ENCODE measurements at regions of chr1 and their contacts with region 1.

Region 1: DNA sequence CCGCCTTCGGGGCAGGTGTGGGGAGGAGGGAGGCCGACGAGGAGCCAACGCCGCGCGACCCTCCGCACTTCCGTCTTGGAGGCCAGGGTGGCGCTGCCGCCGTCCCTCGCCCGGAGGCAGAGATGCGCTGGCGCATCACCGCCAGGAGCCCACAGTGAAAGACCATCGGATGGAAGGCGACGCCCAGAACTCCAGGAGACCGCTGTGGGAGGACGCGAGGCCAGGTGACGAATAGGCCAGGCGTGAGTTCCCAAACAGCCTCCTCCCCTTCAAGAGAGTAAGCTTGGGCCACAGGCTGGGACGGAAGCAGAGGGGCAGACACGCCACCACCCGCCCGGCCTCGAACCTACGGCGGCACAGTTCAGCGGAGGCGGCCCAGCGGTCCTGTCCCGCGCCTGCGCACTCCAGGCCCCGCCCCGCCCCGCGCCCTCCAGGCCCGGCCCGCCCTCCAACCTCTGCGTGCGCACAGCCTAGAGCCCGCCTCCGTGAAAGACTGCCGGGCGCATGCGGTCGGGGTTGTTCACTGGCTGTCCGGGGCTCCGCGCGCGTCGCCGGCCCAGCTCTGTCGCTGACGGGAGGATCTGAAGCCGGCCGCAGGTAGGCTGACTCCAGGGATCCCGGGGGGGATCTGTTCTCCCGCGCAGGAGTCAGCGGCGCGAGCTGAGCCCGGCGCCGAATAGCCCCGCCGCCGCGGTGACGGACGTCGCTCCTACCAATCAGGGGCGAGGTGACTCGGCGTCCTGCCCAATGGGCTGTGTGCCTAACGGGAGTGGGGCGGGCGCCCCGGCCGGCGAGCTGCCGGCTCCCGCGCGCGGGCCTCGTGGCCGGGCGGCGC is at the start of gene CTPS1:
- DNase-seq: peak; percentile 98
- H3K4me3 Mint-ChIP-seq: peak within 1 kb of the TSS; percentile 91
- H3K27ac Mint-ChIP-seq: peak within 1 kb of the TSS; percentile 96
- H3K4me1 Mint-ChIP-seq: peaks cover 43% of the 10 kb centered on the region
- H3K27me3 Mint-ChIP-seq: no peaks in the 10 kb centered on the region
- total RNA-seq, gene CTPS1: 169 and 175 TPM in 2 replicates

Region 2: GRCh38 chr1:39189592-39190041 is 1789.8 kb before region 1 on chr1:
- intact Hi-C with region 1: loop called (anchors 5 kb)
- DNase-seq: no peak
- H3K4me3 Mint-ChIP-seq: peak overlapping the region; percentile 25
- H3K27ac Mint-ChIP-seq: peak overlapping the region; percentile 87
- H3K4me1 Mint-ChIP-seq: peaks cover 73% of the 10 kb centered on the region
- H3K27me3 Mint-ChIP-seq: no peaks in the 10 kb centered on the region

Region 3: DNA sequence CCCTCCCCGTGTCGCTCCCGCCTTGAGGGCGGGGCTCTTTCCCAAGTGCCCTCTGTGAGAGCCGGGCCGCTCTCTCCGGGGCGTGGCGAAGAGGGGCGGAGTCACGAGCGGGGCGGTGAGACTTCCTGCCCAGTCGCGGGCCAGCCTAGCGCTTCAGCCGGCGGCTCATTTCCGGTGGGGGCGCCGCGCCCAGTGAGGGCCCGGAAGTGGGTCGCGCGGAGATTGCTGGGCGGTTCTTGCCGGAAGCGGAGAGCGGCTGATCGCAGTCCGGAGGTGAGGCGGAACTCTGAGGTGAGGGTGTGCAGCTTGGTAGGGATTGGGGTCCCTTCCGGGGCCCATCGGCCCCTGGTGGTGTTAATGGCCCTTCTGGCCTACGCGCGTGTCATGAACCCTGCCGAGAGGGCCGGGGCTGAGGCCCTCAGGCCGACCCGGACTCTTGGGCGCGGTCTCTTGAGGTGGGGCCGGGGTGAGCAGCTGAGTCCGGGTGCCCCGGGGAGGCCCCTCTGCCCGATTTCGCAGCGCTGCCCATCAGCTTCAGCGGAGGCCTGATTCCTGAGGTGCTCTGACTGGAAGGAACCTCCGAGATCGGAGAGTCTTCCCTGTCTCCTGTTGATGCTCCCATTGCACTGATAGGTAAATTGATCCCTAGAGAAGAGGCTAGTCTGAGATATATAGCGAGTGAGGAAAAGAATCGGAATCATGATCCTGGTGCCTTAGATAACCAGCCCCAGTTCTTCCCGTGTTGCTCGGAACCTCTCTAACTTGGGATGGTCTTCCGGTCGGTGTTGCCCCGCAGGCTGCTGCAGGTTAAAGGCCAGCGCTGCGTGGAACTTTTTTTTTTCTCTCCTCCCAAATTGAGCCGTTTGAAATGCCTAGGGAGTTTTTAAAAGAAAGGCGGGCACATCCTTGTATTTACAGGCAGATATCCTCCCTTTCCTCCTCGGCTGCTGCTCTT is 938.7 kb before region 1 on chr1 and contains the start of gene CAP1:
- intact Hi-C with region 1: loop called (anchors 2 kb)
- DNase-seq: peak; percentile 100
- H3K4me3 Mint-ChIP-seq: peak within 1 kb of the TSS; percentile 93
- H3K27ac Mint-ChIP-seq: peak within 1 kb of the TSS; percentile 95
- H3K4me1 Mint-ChIP-seq: peaks cover 60% of the 10 kb centered on the region
- H3K27me3 Mint-ChIP-seq: no peaks in the 10 kb centered on the region
- total RNA-seq, gene CAP1: 417 and 440 TPM in 2 replicates

Region 4: DNA sequence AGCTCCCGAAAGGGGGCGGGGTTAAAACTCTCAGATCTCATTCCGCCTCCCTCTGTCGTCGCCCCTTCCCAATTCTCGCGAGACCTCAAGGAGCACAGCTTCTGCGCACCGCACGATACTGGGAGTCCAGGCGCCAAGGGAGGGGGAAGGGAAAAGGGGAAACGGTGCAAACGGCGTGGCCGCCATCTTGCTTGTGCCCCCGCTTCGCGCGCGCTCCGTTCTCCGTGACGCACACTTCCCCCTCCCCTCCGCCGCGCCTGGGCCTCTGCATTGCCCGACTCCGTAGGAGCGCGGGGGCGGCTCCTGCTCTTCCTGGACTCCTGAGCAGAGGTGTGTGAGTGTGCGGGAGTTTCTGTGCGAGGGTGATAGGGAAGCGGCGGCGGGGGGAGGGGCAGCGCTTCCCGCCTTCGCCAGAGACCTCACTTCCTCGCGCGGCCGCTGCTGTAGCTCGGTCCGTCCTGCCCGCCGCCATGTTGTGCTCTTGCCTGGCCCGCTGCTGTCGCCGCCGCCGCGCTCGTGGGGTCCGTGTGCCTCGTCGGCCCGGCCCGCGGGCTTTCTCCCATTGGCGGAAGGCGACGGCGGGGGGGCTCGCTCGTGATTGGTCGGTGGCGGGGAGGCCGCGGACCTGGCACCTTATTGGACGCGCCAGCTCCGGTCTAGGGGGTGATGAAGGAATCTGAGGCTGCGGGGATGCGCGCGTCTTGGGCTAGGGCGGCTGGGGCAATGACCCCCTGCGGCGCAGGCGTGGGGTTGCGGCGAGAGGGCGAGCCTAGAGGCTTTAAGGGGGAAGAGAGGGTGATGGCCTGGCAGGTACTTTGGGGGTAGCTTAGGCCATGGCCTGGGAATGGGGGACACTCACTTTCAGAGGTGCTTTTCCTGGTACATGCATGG is 287.7 kb before region 1 on chr1 and contains the start of gene NFYC:
- intact Hi-C with region 1: loop called (anchors 1 kb)
- DNase-seq: peak; percentile 99
- H3K4me3 Mint-ChIP-seq: peak within 1 kb of the TSS; percentile 96
- H3K27ac Mint-ChIP-seq: peak within 1 kb of the TSS; percentile 99
- H3K4me1 Mint-ChIP-seq: peaks cover 49% of the 10 kb centered on the region
- H3K27me3 Mint-ChIP-seq: no peaks in the 10 kb centered on the region
- total RNA-seq, gene NFYC: 66.5 and 73.2 TPM in 2 replicates

Region 5: DNA sequence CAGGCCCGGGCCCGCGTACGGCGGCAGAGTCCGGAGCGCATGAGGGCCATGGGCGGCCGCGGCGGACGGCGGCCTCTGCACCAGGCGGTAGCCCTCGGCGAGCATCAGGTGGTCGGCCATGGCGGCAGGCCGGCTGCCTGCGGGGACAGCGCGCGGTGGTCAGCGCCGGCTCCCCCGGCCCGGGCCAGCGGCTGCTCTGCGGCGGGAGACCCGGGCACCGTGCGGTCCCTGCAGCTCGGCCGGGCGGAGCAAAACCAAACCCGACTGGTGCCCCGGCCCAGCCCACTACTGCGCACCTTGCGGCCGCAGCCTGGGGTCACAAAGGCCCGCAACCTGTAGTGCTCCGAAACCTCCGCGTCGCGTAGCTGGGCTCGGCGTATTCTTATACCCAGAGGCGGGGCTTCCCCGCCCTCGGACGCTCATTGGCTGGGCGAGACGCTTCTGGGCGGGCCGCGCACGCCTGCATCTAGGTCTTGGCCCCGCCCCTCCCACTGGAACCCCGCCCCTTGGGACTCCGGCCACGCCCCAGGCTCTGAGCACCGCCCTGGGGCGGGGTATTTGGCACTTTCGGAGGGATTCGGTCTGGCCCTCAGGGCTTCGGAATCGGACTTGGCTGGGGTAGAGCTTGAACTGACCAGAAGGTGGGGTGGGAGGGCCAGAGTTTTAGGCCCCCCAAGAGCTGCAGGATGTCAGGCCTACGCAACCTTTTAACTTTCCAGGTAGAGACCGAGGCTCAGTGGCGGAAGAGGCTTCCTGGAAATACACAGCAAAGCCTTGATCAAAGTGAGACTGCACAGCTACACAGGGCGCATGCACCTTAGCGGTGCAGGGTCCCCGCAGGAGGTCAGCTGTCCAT is 117.2 kb before region 1 on chr1 and contains the start of gene CITED4:
- intact Hi-C with region 1: loop called (anchors 10 kb)
- DNase-seq: peak; percentile 99
- H3K4me3 Mint-ChIP-seq: peak within 1 kb of the TSS; percentile 97
- H3K27ac Mint-ChIP-seq: peak within 1 kb of the TSS; percentile 99
- H3K4me1 Mint-ChIP-seq: peaks cover 16% of the 10 kb centered on the region
- H3K27me3 Mint-ChIP-seq: peaks cover 26% of the 10 kb centered on the region
- total RNA-seq, gene CITED4: 5.5 and 6.0 TPM in 2 replicates

Region 6: GRCh38 chr1:41003640-41004220 is 24.3 kb after region 1 on chr1:
- intact Hi-C with region 1: loop called (anchors 2 kb)
- DNase-seq: peak; percentile 92
- H3K4me3 Mint-ChIP-seq: no peak overlapping the region
- H3K27ac Mint-ChIP-seq: peak overlapping the region; percentile 25
- H3K4me1 Mint-ChIP-seq: peaks cover 28% of the 10 kb centered on the region
- H3K27me3 Mint-ChIP-seq: no peaks in the 10 kb centered on the region

Region 7: DNA sequence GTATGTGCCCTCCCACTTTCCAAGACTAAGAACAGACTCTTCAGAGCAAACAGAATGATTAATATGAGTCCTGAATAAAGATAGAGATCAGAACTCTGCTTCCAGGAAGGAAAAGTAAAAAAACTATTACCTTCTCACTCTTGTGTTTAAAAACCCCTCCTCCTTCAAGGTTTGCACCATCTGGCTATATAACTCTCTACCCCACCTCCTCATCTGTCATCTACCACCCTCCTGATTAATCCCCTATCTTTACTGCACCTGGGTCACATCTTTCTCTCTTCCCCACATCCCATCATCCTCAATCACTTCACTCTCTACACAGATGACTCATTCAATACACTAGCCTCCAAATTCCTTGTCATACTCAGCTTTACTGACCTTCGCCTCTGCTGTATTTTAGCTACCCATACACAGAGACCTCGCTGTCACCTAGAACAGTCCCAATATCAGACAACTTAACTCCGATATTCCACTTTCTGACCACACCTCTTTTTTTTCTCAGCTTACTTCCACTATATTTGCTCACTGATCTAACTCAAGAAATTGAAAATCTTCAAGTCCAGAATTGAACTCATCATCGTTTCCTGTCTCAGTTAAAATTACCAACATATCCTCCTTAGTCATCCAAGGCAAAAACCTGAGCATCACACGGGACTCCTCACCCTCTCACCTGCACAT is 259.0 kb after region 1 on chr1:
- intact Hi-C with region 1: loop called (anchors 1 kb)
- DNase-seq: no peak
- H3K4me3 Mint-ChIP-seq: no peak overlapping the region
- H3K27ac Mint-ChIP-seq: no peak overlapping the region
- H3K4me1 Mint-ChIP-seq: peaks cover 12% of the 10 kb centered on the region
- H3K27me3 Mint-ChIP-seq: no peaks in the 10 kb centered on the region